ENCODE measurements at regions of chr12 and their contacts with region 1.

Region 1: GRCh38 chr12:27305673-27306456 is 26.8 kb upstream of the BMAL2 start:
- DNase-seq: no peak
- H3K4me3 ChIP-seq: no peak overlapping the region
- H3K27ac ChIP-seq: peak overlapping the region; percentile 46 to 64 (median 55)
- H3K4me1 ChIP-seq: peaks cover 0 to 39% (median 31%) of the 10 kb centered on the region in 4 donors
- H3K27me3 ChIP-seq: no peaks in the 10 kb centered on the region
- CTCF ChIP-seq: peak; percentile 37 to 64 (median 60)
- EP300 ChIP-seq: no peak
- POLR2A ChIP-seq: no peak

Region 2: GRCh38 chr12:26937875-26938700 is 367.8 kb before region 1 on chr12 and contains the starts of genes FGFR1OP2 and INTS13:
- intact Hi-C with region 1: loop called (anchors 5 kb)
- DNase-seq: peak; percentile 98
- H3K4me3 ChIP-seq: peak within 1 kb of the TSS; percentile 89 to 96 (median 93)
- H3K27ac ChIP-seq: peak within 1 kb of the TSS; percentile 94 to 97 (median 96)
- H3K4me1 ChIP-seq: peaks cover 40 to 67% (median 63%) of the 10 kb centered on the region in 4 donors
- H3K27me3 ChIP-seq: no peaks in the 10 kb centered on the region
- CTCF ChIP-seq: peak in 1 of 3 experiments; percentile 18
- EP300 ChIP-seq: no peak
- POLR2A ChIP-seq: peak; percentile 95
- total RNA-seq, gene FGFR1OP2: 52.7 to 65.9 (median 59.4) TPM
- total RNA-seq, gene INTS13: 14.2 to 24.9 (median 22.7) TPM

Region 3: DNA sequence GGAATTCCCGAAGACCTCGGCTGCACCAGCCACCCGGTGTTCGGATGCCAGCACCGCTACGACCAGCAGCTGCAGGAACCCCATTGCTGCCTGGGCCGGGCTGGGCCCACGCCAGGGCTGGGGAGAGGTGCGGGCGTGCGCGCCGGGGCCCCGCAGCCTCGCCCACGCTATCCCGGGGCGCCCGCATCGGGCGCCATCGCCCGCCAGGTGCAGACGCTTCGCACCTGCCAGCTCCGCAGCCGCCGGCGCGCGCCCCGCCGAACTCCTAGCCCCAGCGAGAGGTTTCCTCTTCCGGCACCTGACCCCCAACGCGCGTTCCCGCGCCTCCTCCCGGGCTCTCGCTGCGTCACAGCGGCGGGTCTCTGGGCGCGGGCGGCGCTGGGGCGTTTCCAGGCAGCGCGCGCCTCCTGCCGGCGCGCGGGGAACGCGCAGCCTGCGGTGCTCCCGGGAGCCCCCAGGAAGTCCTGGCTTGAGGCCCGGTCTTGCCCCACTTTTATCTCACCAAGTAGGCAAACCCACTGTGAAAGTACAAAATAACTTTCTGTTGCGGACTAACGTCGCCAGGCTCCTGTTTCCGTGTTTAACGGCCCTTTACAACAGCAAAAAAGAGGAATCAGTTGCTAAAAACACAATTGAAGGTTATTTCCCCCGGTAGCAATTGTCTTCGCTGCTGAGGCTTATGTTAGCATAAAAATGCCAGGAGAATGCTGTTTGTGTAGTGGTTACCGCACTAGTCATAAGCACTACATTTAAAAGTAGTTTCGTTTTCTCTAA is 291.6 kb before region 1 on chr12 and contains the start of gene TM7SF3:
- intact Hi-C with region 1: loop called (anchors 5 kb)
- DNase-seq: peak; percentile 95
- H3K4me3 ChIP-seq: peak within 1 kb of the TSS; percentile 82 to 95 (median 92)
- H3K27ac ChIP-seq: peak within 1 kb of the TSS; percentile 86 to 92 (median 88)
- H3K4me1 ChIP-seq: peaks cover 18 to 57% (median 46%) of the 10 kb centered on the region in 4 donors
- H3K27me3 ChIP-seq: no peaks in the 10 kb centered on the region
- CTCF ChIP-seq: peak; percentile 95 to 99 (median 98)
- EP300 ChIP-seq: no peak
- POLR2A ChIP-seq: no peak
- total RNA-seq, gene TM7SF3: 31.8 to 50.7 (median 40.5) TPM

Region 4: GRCh38 chr12:27034607-27035293 is 271.1 kb before region 1 on chr12:
- intact Hi-C with region 1: loop called (anchors 2 kb)
- DNase-seq: peak; percentile 26
- H3K4me3 ChIP-seq: no peak overlapping the region
- H3K27ac ChIP-seq: no peak overlapping the region
- H3K4me1 ChIP-seq: no peaks in the 10 kb centered on the region
- H3K27me3 ChIP-seq: no peaks in the 10 kb centered on the region
- CTCF ChIP-seq: no peak
- EP300 ChIP-seq: no peak
- POLR2A ChIP-seq: no peak

Region 5: GRCh38 chr12:27142101-27142721 is 163.7 kb before region 1 on chr12:
- intact Hi-C with region 1: loop called (anchors 5 kb)
- DNase-seq: no peak
- H3K4me3 ChIP-seq: no peak overlapping the region
- H3K27ac ChIP-seq: no peak overlapping the region
- H3K4me1 ChIP-seq: peaks cover 0 to 20% (median 10%) of the 10 kb centered on the region in 4 donors
- H3K27me3 ChIP-seq: no peaks in the 10 kb centered on the region
- CTCF ChIP-seq: peak; percentile 78 to 84 (median 81)
- EP300 ChIP-seq: no peak
- POLR2A ChIP-seq: no peak

Region 6: DNA sequence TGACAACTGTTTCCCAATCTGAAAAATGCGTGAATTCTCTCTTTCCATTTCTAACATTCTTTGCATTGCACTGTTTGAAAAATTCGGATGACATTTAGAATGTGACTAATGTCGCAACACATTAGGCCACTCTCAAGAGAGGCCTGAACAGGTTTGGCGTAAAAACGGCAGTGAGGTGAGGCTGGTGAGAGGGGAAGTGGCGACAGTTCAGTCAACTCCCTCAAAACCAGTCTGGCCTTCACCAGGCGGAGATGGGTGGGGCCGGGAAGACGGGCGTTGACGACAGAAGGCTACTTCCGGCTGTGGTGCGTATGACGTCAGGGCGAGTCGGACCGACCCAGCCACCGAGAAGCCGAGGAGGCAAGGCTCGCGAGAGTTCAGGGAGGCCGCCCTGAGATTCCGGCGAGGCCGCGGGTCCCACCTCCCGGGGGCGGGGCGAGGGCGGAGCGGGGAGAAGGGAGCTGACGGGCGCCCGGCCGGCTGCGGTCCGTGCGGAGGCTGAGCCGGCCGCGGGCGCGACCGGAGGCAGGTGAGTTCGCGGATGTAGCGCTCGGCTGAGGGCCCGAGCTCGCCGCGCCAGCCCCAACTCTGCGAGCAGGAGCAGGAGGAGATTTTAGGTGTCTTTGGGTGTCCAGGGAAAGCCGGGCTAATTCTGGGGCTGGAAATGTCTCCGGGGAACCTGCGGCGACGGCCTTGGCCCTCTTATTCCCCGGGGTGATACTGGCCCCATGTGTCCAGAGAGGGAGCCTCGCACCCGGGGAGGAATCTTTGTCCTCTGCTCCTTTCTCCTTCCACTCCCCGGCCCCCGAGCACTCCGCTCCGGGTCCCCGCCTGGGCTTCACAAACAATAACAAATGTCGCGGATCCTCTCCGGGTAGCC is 61.8 kb before region 1 on chr12 and contains the start of gene STK38L:
- intact Hi-C with region 1: loop called (anchors 2 kb)
- DNase-seq: peak; percentile 99
- H3K4me3 ChIP-seq: peak within 1 kb of the TSS; percentile 78 to 91 (median 80)
- H3K27ac ChIP-seq: peak within 1 kb of the TSS; percentile 88 to 94 (median 94)
- H3K4me1 ChIP-seq: peaks cover 14 to 43% (median 36%) of the 10 kb centered on the region in 4 donors
- H3K27me3 ChIP-seq: no peaks in the 10 kb centered on the region
- CTCF ChIP-seq: peak; percentile 36 to 42 (median 39)
- EP300 ChIP-seq: peak; percentile 22
- POLR2A ChIP-seq: peak; percentile 92
- total RNA-seq, gene STK38L: 64.6 to 102 (median 82.4) TPM

Region 7: GRCh38 chr12:27511031-27511722 is 205.3 kb after region 1 on chr12:
- intact Hi-C with region 1: no loop called
- DNase-seq: no peak
- H3K4me3 ChIP-seq: no peak overlapping the region
- H3K27ac ChIP-seq: peak overlapping the region; percentile 10 to 67 (median 36)
- H3K4me1 ChIP-seq: peaks cover 4 to 32% (median 21%) of the 10 kb centered on the region in 4 donors
- H3K27me3 ChIP-seq: no peaks in the 10 kb centered on the region
- CTCF ChIP-seq: no peak
- EP300 ChIP-seq: no peak
- POLR2A ChIP-seq: no peak

Measured in esophagus muscularis mucosa (tissue), 4 donors.